ENCODE measurements at regions of chr4 and their contacts with region 1.

Region 1: GRCh38 chr4:110516106-110516922 is 40.4 kb downstream of the ENPEP start:
- DNase-seq: peak; percentile 47 to 60 (median 52)
- H3K4me3 ChIP-seq: peak overlapping the region; percentile 38 to 67 (median 62)
- H3K4me3 Mint-ChIP-seq: peak overlapping the region; percentile 81 to 89
- H3K27ac ChIP-seq: no peak overlapping the region
- H3K27ac Mint-ChIP-seq: peak overlapping the region in 2 of 7 donors; percentile 1 to 40
- H3K4me1 ChIP-seq: peaks cover 7 to 11% of the 10 kb centered on the region in 2 donors
- H3K4me1 Mint-ChIP-seq: peaks cover 13% of the 10 kb centered on the region
- H3K27me3 ChIP-seq: peaks cover 0 to 2% of the 10 kb centered on the region in 2 donors
- H3K27me3 Mint-ChIP-seq: peaks cover 2 to 8% (median 5%) of the 10 kb centered on the region in 3 donors
- CTCF ChIP-seq: peak; percentile 82

Region 2: GRCh38 chr4:109836986-109837385 is 679.3 kb before region 1 on chr4:
- intact Hi-C with region 1: no loop called
- DNase-seq: no peak
- H3K4me3 ChIP-seq: no peak overlapping the region
- H3K4me3 Mint-ChIP-seq: no peak overlapping the region
- H3K27ac ChIP-seq: no peak overlapping the region
- H3K27ac Mint-ChIP-seq: no peak overlapping the region
- H3K4me1 ChIP-seq: no peaks in the 10 kb centered on the region
- H3K4me1 Mint-ChIP-seq: no peaks in the 10 kb centered on the region
- H3K27me3 ChIP-seq: no peaks in the 10 kb centered on the region
- H3K27me3 Mint-ChIP-seq: peaks cover 0 to 2% (median 1%) of the 10 kb centered on the region in 3 donors
- CTCF ChIP-seq: no peak

Region 3: GRCh38 chr4:109998867-109999584 is 517.3 kb before region 1 on chr4:
- intact Hi-C with region 1: loop called (anchors 2 kb)
- DNase-seq: peak; percentile 49 to 74 (median 64)
- H3K4me3 ChIP-seq: no peak overlapping the region
- H3K4me3 Mint-ChIP-seq: no peak overlapping the region
- H3K27ac ChIP-seq: no peak overlapping the region
- H3K27ac Mint-ChIP-seq: no peak overlapping the region
- H3K4me1 ChIP-seq: peaks cover 23 to 41% of the 10 kb centered on the region in 2 donors
- H3K4me1 Mint-ChIP-seq: peaks cover 35% of the 10 kb centered on the region
- H3K27me3 ChIP-seq: peaks cover 16 to 23% of the 10 kb centered on the region in 2 donors
- H3K27me3 Mint-ChIP-seq: peaks cover 14 to 18% (median 17%) of the 10 kb centered on the region in 3 donors
- CTCF ChIP-seq: peak; percentile 79

Region 4: DNA sequence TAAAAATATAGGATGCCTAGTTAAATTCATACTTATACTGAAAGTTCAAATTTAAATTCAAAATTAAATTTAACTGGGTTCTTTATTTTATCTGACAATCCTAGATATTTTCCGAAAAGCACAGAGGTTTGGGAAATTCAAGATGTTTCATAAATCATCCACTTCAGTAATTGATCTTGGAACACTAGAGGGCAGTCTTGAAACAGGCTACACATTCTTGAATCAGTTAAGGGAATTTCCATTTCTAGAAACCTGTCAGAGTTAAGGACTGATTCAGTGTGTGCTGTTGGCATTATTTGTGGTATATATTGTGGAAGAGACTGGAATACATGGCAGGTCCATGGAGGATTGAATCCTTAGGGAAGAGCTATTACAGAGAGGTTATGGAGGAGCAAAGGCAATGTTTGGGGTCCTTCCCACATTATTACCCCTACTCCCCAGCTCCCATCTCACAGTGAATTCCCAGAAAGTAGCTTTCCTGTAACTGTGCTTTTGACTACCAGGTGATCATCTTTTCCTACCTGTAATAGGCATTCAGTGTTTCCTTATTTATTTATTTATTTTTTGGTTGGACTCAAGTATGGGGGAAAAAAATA is 510.8 kb before region 1 on chr4:
- intact Hi-C with region 1: loop called (anchors 2 kb)
- DNase-seq: peak; percentile 39 to 76 (median 65)
- H3K4me3 ChIP-seq: no peak overlapping the region
- H3K4me3 Mint-ChIP-seq: peak overlapping the region in 1 of 2 donors; percentile 76
- H3K27ac ChIP-seq: no peak overlapping the region
- H3K27ac Mint-ChIP-seq: no peak overlapping the region
- H3K4me1 ChIP-seq: peaks cover 0 to 8% of the 10 kb centered on the region in 2 donors
- H3K4me1 Mint-ChIP-seq: peaks cover 12% of the 10 kb centered on the region
- H3K27me3 ChIP-seq: peaks cover 37 to 45% of the 10 kb centered on the region in 2 donors
- H3K27me3 Mint-ChIP-seq: peaks cover 28 to 42% (median 31%) of the 10 kb centered on the region in 3 donors
- CTCF ChIP-seq: peak; percentile 84

Region 5: DNA sequence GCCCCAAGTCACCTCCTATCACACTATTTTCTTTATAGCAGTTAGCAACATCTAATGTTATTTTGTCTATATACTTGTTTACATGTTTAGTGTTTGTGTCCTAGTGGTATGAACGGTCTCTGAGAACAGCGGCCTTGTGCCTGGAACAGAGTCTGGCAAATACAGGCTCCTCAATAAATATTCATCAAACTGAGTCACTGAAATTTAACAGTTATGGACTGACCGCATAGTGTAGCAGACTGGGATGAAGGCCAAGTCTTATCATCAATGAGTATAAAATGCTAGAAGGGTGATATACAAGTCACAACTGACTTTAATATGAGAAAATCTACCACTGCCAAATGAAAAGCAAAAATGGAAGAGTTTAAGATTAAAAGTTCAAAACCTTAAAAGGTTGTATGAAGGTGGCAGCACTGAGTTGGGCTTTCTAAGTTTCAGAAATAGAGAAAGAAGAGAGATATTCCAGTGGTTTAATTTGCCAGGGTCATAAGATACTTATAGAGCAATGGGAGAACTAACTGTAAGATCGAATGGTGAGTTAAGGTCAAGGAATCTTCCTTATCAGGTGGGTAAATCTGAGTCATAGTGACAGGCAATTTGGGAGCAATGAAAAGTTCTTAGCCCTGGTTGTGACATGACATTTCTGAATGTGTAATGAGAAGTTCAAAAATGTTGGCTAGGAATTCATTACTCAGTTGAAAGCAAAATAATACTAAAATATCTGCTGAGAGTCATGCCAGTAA is 352.8 kb before region 1 on chr4:
- intact Hi-C with region 1: no loop called
- DNase-seq: no peak
- H3K4me3 ChIP-seq: no peak overlapping the region
- H3K4me3 Mint-ChIP-seq: no peak overlapping the region
- H3K27ac ChIP-seq: no peak overlapping the region
- H3K27ac Mint-ChIP-seq: no peak overlapping the region
- H3K4me1 ChIP-seq: no peaks in the 10 kb centered on the region
- H3K4me1 Mint-ChIP-seq: peaks cover 8% of the 10 kb centered on the region
- H3K27me3 ChIP-seq: no peaks in the 10 kb centered on the region
- H3K27me3 Mint-ChIP-seq: no peaks in the 10 kb centered on the region
- CTCF ChIP-seq: no peak

Measured in CD14-positive monocyte (primary cell).